Naive thymus-derived CD4-positive, alpha-beta T cell (primary cell): ENCODE measurements at regions of chr1 and their contacts with region 1.

Region 1: GRCh38 chr1:192609110-192610079 is 26.6 kb upstream of the RGS13 start:
- DNase-seq: peak; percentile 30 to 80 (median 69)
- ATAC-seq: peak; percentile 96
- H3K4me3 ChIP-seq: peak overlapping the region; percentile 3
- H3K4me3 Mint-ChIP-seq: peak overlapping the region; percentile 52 to 81 (median 65)
- H3K27ac ChIP-seq: peak overlapping the region; percentile 14
- H3K27ac Mint-ChIP-seq: peak overlapping the region; percentile 54 to 91 (median 86)
- H3K4me1 ChIP-seq: peaks cover 10 to 14% of the 10 kb centered on the region in 2 donors
- H3K4me1 Mint-ChIP-seq: peaks cover 12 to 16% (median 15%) of the 10 kb centered on the region in 7 donors
- H3K27me3 ChIP-seq: no peaks in the 10 kb centered on the region
- H3K27me3 Mint-ChIP-seq: peaks cover 0 to 2% (median 0%) of the 10 kb centered on the region in 5 donors

Region 2: GRCh38 chr1:192506741-192507155 is 102.6 kb before region 1 on chr1:
- CTCF ChIA-PET with region 1: no interaction called
- POLR2A ChIA-PET with region 1: no interaction called
- intact Hi-C with region 1: loop called in 1 of 2 experiments (anchors 1 kb)
- DNase-seq: no peak
- ATAC-seq: peak; percentile 27
- H3K4me3 ChIP-seq: no peak overlapping the region
- H3K4me3 Mint-ChIP-seq: no peak overlapping the region
- H3K27ac ChIP-seq: no peak overlapping the region
- H3K27ac Mint-ChIP-seq: no peak overlapping the region
- H3K4me1 ChIP-seq: peaks cover 0 to 3% of the 10 kb centered on the region in 2 donors
- H3K4me1 Mint-ChIP-seq: peaks cover 0 to 4% (median 0%) of the 10 kb centered on the region in 7 donors
- H3K27me3 ChIP-seq: no peaks in the 10 kb centered on the region
- H3K27me3 Mint-ChIP-seq: peaks cover 0 to 6% (median 0%) of the 10 kb centered on the region in 5 donors

Region 3: DNA sequence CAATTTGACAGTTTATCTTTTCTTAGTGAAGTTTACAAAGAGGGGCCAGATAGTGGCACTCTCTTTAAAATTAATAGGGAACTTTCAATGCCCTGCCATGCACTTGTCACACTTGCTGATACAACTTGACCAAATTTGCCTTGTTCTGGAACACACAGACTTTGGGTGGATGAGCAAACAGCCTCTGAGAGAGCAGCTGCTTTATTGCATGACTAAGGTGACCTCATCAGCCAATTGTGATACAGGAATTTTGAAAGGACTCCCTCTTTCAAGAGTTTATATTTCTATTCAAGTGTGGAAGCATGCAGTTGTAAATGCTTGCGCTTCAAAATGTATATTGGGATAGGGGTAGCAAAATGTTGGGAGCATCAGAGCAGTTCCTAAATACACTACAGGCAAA is 35.9 kb before region 1 on chr1:
- CTCF ChIA-PET with region 1: no interaction called
- POLR2A ChIA-PET with region 1: no interaction called
- intact Hi-C with region 1: loop called in 1 of 2 experiments (anchors 5 kb)
- DNase-seq: no peak
- ATAC-seq: no peak
- H3K4me3 ChIP-seq: no peak overlapping the region
- H3K4me3 Mint-ChIP-seq: peak overlapping the region in 3 of 10 donors; percentile 11 to 53 (median 49)
- H3K27ac ChIP-seq: no peak overlapping the region
- H3K27ac Mint-ChIP-seq: peak overlapping the region in 7 of 9 donors; percentile 17 to 84 (median 49)
- H3K4me1 ChIP-seq: peaks cover 23 to 45% of the 10 kb centered on the region in 2 donors
- H3K4me1 Mint-ChIP-seq: peaks cover 23 to 75% (median 61%) of the 10 kb centered on the region in 7 donors
- H3K27me3 ChIP-seq: no peaks in the 10 kb centered on the region
- H3K27me3 Mint-ChIP-seq: no peaks in the 10 kb centered on the region

Region 4: DNA sequence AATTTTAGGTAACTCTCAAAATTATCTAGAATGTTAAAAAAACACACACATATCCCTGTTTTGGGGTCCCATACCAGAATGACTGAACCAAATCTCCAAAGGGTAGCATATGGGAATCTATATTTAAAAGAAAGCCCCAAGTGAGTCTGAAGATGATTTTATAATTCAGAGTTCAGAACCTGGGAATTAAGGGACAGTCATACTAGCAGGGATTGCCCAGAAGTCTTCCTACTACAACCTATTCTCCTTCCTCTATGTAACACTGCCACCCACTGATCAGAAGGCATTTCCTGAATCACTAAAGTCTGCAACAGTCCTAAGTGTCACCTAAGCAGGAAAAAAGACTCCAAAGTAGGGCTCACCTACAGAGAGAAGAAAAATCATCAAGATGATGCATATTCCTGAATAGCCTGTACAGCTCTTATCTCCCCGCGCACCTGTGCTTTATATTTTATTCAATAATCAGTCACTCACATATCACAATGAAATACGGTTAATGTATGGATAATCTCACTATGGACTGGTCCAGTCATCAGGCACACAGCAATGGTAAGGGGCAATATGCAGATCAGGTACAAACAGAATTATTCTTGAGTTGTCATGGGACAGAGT is 28.9 kb before region 1 on chr1:
- CTCF ChIA-PET with region 1: interaction called, 3 read pairs
- POLR2A ChIA-PET with region 1: no interaction called
- intact Hi-C with region 1: loop called (anchors 1 kb)
- DNase-seq: peak in 3 of 9 donors; percentile 15 to 44 (median 38)
- ATAC-seq: peak; percentile 40
- H3K4me3 ChIP-seq: no peak overlapping the region
- H3K4me3 Mint-ChIP-seq: peak overlapping the region in 2 of 10 donors; percentile 31 to 40
- H3K27ac ChIP-seq: no peak overlapping the region
- H3K27ac Mint-ChIP-seq: peak overlapping the region in 2 of 9 donors; percentile 8 to 43
- H3K4me1 ChIP-seq: peaks cover 7 to 15% of the 10 kb centered on the region in 2 donors
- H3K4me1 Mint-ChIP-seq: peaks cover 8 to 44% (median 28%) of the 10 kb centered on the region in 7 donors
- H3K27me3 ChIP-seq: no peaks in the 10 kb centered on the region
- H3K27me3 Mint-ChIP-seq: peaks cover 0 to 2% (median 0%) of the 10 kb centered on the region in 5 donors

Region 5: DNA sequence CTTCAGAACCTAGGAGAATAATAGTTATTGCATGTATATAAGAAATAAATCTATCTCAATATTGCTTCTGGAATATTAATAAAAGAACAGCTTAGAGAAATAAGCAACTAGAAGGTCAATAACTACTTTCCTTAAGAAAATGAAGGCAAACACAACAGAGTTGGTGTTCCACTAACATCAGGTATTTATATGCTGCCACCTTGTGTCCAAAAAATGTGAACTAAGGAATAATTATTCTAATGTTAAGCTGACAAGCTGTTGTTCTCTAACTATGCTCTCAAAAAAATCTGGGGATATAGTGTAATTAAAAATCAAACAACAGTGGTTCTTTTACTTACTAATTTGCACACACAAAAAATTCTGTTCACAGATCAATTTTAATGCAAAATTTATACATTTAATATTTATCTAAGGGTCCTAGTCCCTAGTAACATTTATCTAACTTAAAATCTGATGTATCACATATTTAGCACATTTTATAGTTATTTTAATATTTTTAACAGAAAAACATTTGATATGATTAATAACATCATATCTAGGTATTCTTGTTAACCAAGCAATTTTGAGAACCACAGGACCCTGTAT is 410.1 kb after region 1 on chr1:
- CTCF ChIA-PET with region 1: interaction called, 3 read pairs
- POLR2A ChIA-PET with region 1: no interaction called
- intact Hi-C with region 1: loop called (anchors 1 to 5 kb)
- DNase-seq: peak in 6 of 9 donors; percentile 14 to 36 (median 22)
- ATAC-seq: peak; percentile 55
- H3K4me3 ChIP-seq: no peak overlapping the region
- H3K4me3 Mint-ChIP-seq: no peak overlapping the region
- H3K27ac ChIP-seq: no peak overlapping the region
- H3K27ac Mint-ChIP-seq: no peak overlapping the region
- H3K4me1 ChIP-seq: no peaks in the 10 kb centered on the region
- H3K4me1 Mint-ChIP-seq: no peaks in the 10 kb centered on the region
- H3K27me3 ChIP-seq: no peaks in the 10 kb centered on the region
- H3K27me3 Mint-ChIP-seq: no peaks in the 10 kb centered on the region